ENCODE measurements at regions of chr7 and their contacts with region 1.

Region 1: GRCh38 chr7:116984917-116985316 is 31.6 kb downstream of the ST7 start:
- DNase-seq: no peak
- ATAC-seq: peak; percentile 75
- H3K4me3 ChIP-seq: no peak overlapping the region
- H3K27ac ChIP-seq: no peak overlapping the region
- H3K4me1 ChIP-seq: peaks cover 24% of the 10 kb centered on the region
- H3K27me3 ChIP-seq: no peaks in the 10 kb centered on the region
- CTCF ChIP-seq: peak; percentile 54 to 64 (median 59); a peak in 5 of 6 replicates
- EP300 ChIP-seq: no peak
- POLR2A ChIP-seq: no peak
- RAD21 ChIP-seq: peak; percentile 66

Region 2: GRCh38 chr7:116598278-116598677 is 386.6 kb before region 1 on chr7:
- CTCF ChIA-PET with region 1: no interaction called
- POLR2A ChIA-PET with region 1: no interaction called
- RAD21 ChIA-PET with region 1: no interaction called
- SMC1A ChIA-PET with region 1: no interaction called
- in situ Hi-C with region 1: no loop called
- intact Hi-C with region 1: no loop called
- DNase-seq: no peak
- ATAC-seq: peak; percentile 76
- H3K4me3 ChIP-seq: no peak overlapping the region
- H3K27ac ChIP-seq: no peak overlapping the region
- H3K4me1 ChIP-seq: no peaks in the 10 kb centered on the region
- H3K27me3 ChIP-seq: peaks cover 0 to 5% of the 10 kb centered on the region in 2 experiments; a peak in 1 of 4 replicates
- CTCF ChIP-seq: peak in 2 of 3 experiments; percentile 41 to 48; a peak in 4 of 6 replicates
- EP300 ChIP-seq: no peak
- POLR2A ChIP-seq: no peak
- RAD21 ChIP-seq: peak; percentile 48; the same call in 1 of the 2 replicates

Region 3: DNA sequence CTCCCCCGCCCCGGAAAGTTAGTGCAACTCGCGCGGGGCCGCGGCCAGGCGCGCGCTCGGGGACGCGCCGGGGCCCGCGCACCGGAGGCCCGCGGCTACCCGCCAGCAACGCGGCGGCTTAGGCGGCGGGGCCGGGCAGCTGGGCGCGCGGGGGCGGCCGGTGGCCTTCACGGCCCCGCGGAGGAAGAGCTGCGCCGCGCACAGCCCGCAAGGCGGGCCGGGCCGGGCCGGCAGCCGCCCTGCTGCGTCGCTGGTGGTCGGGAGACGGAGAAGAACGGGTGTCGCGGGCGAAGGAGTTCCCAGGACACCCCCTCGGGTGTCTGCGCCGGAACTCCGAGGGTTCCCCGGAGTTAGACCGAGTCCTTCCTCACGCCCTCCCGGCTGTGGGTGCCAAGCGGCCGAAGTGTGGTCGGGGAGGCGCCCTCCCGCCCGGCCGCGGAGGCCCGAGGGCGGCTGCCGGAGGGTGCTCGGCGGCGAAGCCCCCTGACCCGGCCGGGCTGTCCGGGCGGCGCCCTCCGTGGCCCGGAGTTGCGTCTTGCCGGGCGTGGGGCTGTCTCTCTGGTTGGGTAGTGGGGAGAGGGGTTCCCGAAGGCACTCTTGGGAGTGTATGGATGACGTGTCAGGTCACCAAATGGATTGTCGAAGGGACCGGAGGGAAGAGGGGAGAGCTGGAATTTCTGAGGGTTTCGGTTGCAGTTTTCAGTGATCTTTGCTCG is 31.0 kb before region 1 on chr7:
- CTCF ChIA-PET with region 1: interaction called, 70 read pairs
- POLR2A ChIA-PET with region 1: interaction called, 6 read pairs
- RAD21 ChIA-PET with region 1: interaction called, 22 read pairs
- SMC1A ChIA-PET with region 1: interaction called, 11 read pairs
- in situ Hi-C with region 1: no loop called
- intact Hi-C with region 1: loop called (anchors 2 kb)
- DNase-seq: no peak
- ATAC-seq: peak; percentile 21
- H3K4me3 ChIP-seq: peak overlapping the region; percentile 79
- H3K27ac ChIP-seq: peak overlapping the region; percentile 98
- H3K4me1 ChIP-seq: peaks cover 22% of the 10 kb centered on the region
- H3K27me3 ChIP-seq: no peaks in the 10 kb centered on the region
- CTCF ChIP-seq: no peak
- EP300 ChIP-seq: peak in 1 of 2 experiments; percentile 19; a peak in 1 of 4 replicates
- POLR2A ChIP-seq: peak; percentile 62
- RAD21 ChIP-seq: no peak

Region 4: DNA sequence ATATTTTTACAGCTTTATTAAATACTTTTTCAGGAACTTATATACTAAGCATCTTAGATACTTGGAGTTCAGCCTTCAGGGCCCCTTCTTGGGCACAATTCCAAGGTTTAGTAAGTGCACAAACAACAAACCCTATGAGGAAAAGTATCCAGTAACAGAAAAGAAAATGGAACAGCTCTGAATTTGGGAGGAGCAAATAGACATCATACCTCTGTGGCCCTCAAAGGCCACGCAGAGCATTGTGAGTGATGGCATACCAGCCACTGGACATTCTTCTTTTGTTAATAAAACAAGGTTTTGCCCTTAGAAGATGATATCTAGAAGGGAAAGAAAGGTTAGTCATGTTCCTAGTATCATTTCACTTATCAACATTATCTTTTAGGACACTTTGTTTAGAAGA is 14.4 kb after region 1 on chr7:
- CTCF ChIA-PET with region 1: interaction called, 287 read pairs
- POLR2A ChIA-PET with region 1: no interaction called
- RAD21 ChIA-PET with region 1: interaction called, 4 read pairs
- SMC1A ChIA-PET with region 1: interaction called, 223 read pairs
- in situ Hi-C with region 1: no loop called
- intact Hi-C with region 1: no loop called
- DNase-seq: no peak
- ATAC-seq: no peak
- H3K4me3 ChIP-seq: no peak overlapping the region
- H3K27ac ChIP-seq: no peak overlapping the region
- H3K4me1 ChIP-seq: no peaks in the 10 kb centered on the region
- H3K27me3 ChIP-seq: no peaks in the 10 kb centered on the region
- CTCF ChIP-seq: no peak
- EP300 ChIP-seq: no peak
- POLR2A ChIP-seq: no peak
- RAD21 ChIP-seq: no peak

Region 5: GRCh38 chr7:117019786-117020590 is 35.1 kb after region 1 on chr7:
- CTCF ChIA-PET with region 1: interaction called, 4 read pairs
- POLR2A ChIA-PET with region 1: no interaction called
- RAD21 ChIA-PET with region 1: interaction called, 5 read pairs
- SMC1A ChIA-PET with region 1: interaction called, 13 read pairs
- in situ Hi-C with region 1: no loop called
- intact Hi-C with region 1: no loop called
- DNase-seq: no peak
- ATAC-seq: no peak
- H3K4me3 ChIP-seq: 0 out of 2 replicates have a peak overlapping the region, but pooled peaks have one; percentile 17
- H3K27ac ChIP-seq: no peak overlapping the region
- H3K4me1 ChIP-seq: peaks cover 30% of the 10 kb centered on the region
- H3K27me3 ChIP-seq: no peaks in the 10 kb centered on the region
- CTCF ChIP-seq: no peak
- EP300 ChIP-seq: no peak
- POLR2A ChIP-seq: no peak
- RAD21 ChIP-seq: no peak

Region 6: GRCh38 chr7:117110480-117111337 is 125.8 kb after region 1 on chr7:
- CTCF ChIA-PET with region 1: interaction called, 827 read pairs
- POLR2A ChIA-PET with region 1: interaction called, 5 read pairs
- RAD21 ChIA-PET with region 1: interaction called, 379 read pairs
- SMC1A ChIA-PET with region 1: interaction called, 527 read pairs
- in situ Hi-C with region 1: loop called (anchors 5 kb)
- intact Hi-C with region 1: no loop called
- DNase-seq: peak; percentile 70
- ATAC-seq: peak; percentile 97
- H3K4me3 ChIP-seq: peak overlapping the region; percentile 41
- H3K27ac ChIP-seq: peak overlapping the region; percentile 63
- H3K4me1 ChIP-seq: peaks cover 10% of the 10 kb centered on the region
- H3K27me3 ChIP-seq: no peaks in the 10 kb centered on the region
- CTCF ChIP-seq: no peak
- EP300 ChIP-seq: 0 out of 4 replicates have a peak, but pooled peaks of 1 of the 2 experiments have one; percentile 20
- POLR2A ChIP-seq: 0 out of 2 replicates have a peak, but pooled peaks have one; percentile 21
- RAD21 ChIP-seq: 0 out of 2 replicates have a peak, but pooled peaks have one; percentile 6

Region 7: GRCh38 chr7:117134889-117135552 is 150.1 kb after region 1 on chr7:
- CTCF ChIA-PET with region 1: interaction called, 63 read pairs
- POLR2A ChIA-PET with region 1: no interaction called
- RAD21 ChIA-PET with region 1: interaction called, 8 read pairs
- SMC1A ChIA-PET with region 1: interaction called, 34 read pairs
- in situ Hi-C with region 1: no loop called
- intact Hi-C with region 1: no loop called
- DNase-seq: no peak
- ATAC-seq: peak; percentile 38
- H3K4me3 ChIP-seq: no peak overlapping the region
- H3K27ac ChIP-seq: peak overlapping the region; percentile 46; the same call in 1 of the 2 replicates
- H3K4me1 ChIP-seq: peaks cover 9% of the 10 kb centered on the region; the same call in 1 of the 2 replicates
- H3K27me3 ChIP-seq: no peaks in the 10 kb centered on the region
- CTCF ChIP-seq: no peak
- EP300 ChIP-seq: no peak
- POLR2A ChIP-seq: no peak
- RAD21 ChIP-seq: no peak